Activated CD4-positive, alpha-beta T cell treated with anti-CD3 and anti-CD28 coated beads for 36 hours (primary cell): ENCODE measurements at regions of chr1 and their contacts with region 1.

Region 1: DNA sequence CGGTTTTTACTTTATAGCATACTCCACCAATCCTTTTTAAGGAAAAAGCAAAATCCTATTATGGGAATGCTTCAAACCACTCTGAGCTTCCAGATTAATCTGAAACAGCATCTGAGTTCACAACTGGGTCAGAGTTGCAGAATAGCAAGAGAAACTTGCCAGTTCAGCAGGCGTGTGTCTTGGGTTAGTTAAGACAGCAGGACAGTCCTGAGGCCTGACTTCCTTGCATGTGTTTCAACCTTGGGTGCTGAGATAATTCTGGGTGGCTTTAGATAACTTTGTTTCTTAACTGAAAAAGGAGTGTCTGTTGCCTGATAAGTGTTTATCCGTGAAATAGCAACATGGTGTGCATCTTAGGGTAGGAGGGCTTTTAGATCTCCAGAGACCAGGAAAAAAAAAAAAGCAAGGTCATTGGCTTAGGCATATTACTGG is 169.2 kb downstream of the DHRS3 start:
- DNase-seq: no peak
- ATAC-seq: no peak
- H3K4me3 Mint-ChIP-seq: peak overlapping the region; percentile 24
- H3K27ac Mint-ChIP-seq: peak overlapping the region; percentile 76
- H3K4me1 Mint-ChIP-seq: peaks cover 69% of the 10 kb centered on the region
- H3K27me3 Mint-ChIP-seq: peaks cover 10% of the 10 kb centered on the region

Region 2: GRCh38 chr1:12012560-12013316 is 436.0 kb before region 1 on chr1:
- CTCF ChIA-PET with region 1: no interaction called
- POLR2A ChIA-PET with region 1: no interaction called
- intact Hi-C with region 1: no loop called
- DNase-seq: peak; percentile 25
- ATAC-seq: peak; percentile 37
- H3K4me3 Mint-ChIP-seq: no peak overlapping the region
- H3K27ac Mint-ChIP-seq: peak overlapping the region; percentile 74
- H3K4me1 Mint-ChIP-seq: peaks cover 25% of the 10 kb centered on the region
- H3K27me3 Mint-ChIP-seq: no peaks in the 10 kb centered on the region

Region 3: GRCh38 chr1:12161662-12162458 is 286.9 kb before region 1 on chr1:
- CTCF ChIA-PET with region 1: no interaction called
- POLR2A ChIA-PET with region 1: no interaction called
- intact Hi-C with region 1: loop called in 1 of 2 experiments (anchors 1 kb)
- DNase-seq: peak; percentile 89
- ATAC-seq: peak; percentile 84
- H3K4me3 Mint-ChIP-seq: peak overlapping the region; percentile 15
- H3K27ac Mint-ChIP-seq: peak overlapping the region; percentile 91
- H3K4me1 Mint-ChIP-seq: peaks cover 73% of the 10 kb centered on the region
- H3K27me3 Mint-ChIP-seq: no peaks in the 10 kb centered on the region

Region 4: GRCh38 chr1:12220890-12221289 is 227.9 kb before region 1 on chr1:
- CTCF ChIA-PET with region 1: no interaction called
- POLR2A ChIA-PET with region 1: no interaction called
- intact Hi-C with region 1: no loop called
- DNase-seq: no peak
- ATAC-seq: no peak
- H3K4me3 Mint-ChIP-seq: no peak overlapping the region
- H3K27ac Mint-ChIP-seq: no peak overlapping the region
- H3K4me1 Mint-ChIP-seq: no peaks in the 10 kb centered on the region
- H3K27me3 Mint-ChIP-seq: peaks cover 3% of the 10 kb centered on the region

Region 5: GRCh38 chr1:12344596-12345349 is 104.0 kb before region 1 on chr1:
- CTCF ChIA-PET with region 1: no interaction called
- POLR2A ChIA-PET with region 1: no interaction called
- intact Hi-C with region 1: loop called in 1 of 2 experiments (anchors 1 kb)
- DNase-seq: peak; percentile 58
- ATAC-seq: peak; percentile 68
- H3K4me3 Mint-ChIP-seq: peak overlapping the region; percentile 63
- H3K27ac Mint-ChIP-seq: peak overlapping the region; percentile 93
- H3K4me1 Mint-ChIP-seq: peaks cover 61% of the 10 kb centered on the region
- H3K27me3 Mint-ChIP-seq: no peaks in the 10 kb centered on the region

Region 6: GRCh38 chr1:12467570-12468286 is 19.0 kb after region 1 on chr1:
- CTCF ChIA-PET with region 1: interaction called, 5 read pairs
- POLR2A ChIA-PET with region 1: no interaction called
- intact Hi-C with region 1: loop called (anchors 1 kb)
- DNase-seq: no peak
- ATAC-seq: peak; percentile 73
- H3K4me3 Mint-ChIP-seq: no peak overlapping the region
- H3K27ac Mint-ChIP-seq: peak overlapping the region; percentile 89
- H3K4me1 Mint-ChIP-seq: peaks cover 51% of the 10 kb centered on the region
- H3K27me3 Mint-ChIP-seq: no peaks in the 10 kb centered on the region

Region 7: DNA sequence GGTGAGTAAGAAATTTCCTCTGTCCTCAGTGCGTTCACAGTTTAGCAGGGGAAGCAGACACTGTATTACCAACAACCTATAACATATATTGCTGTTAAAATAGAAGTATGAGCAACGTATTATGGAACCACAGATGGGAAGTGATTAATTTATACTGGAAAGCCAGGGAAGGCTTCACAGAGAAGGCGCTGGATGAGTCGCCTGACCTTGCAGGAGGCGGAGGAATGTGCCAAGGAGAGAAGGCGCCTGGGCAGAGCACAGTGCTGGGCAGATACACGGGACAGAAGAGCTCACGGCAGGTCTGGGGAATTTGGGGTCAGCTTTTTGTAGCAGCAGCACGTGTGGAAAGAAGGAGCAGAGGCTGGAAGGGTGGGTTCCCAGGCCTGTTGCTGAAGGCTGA is 52.9 kb after region 1 on chr1:
- CTCF ChIA-PET with region 1: no interaction called
- POLR2A ChIA-PET with region 1: no interaction called
- intact Hi-C with region 1: loop called in 1 of 2 experiments (anchors 1 kb)
- DNase-seq: no peak
- ATAC-seq: no peak
- H3K4me3 Mint-ChIP-seq: no peak overlapping the region
- H3K27ac Mint-ChIP-seq: peak overlapping the region; percentile 68
- H3K4me1 Mint-ChIP-seq: peaks cover 45% of the 10 kb centered on the region
- H3K27me3 Mint-ChIP-seq: no peaks in the 10 kb centered on the region

Region 8: GRCh38 chr1:12518931-12519692 is 70.3 kb after region 1 on chr1:
- CTCF ChIA-PET with region 1: no interaction called
- POLR2A ChIA-PET with region 1: no interaction called
- intact Hi-C with region 1: loop called (anchors 1 kb)
- DNase-seq: peak; percentile 82
- ATAC-seq: peak; percentile 98
- H3K4me3 Mint-ChIP-seq: no peak overlapping the region
- H3K27ac Mint-ChIP-seq: peak overlapping the region; percentile 59
- H3K4me1 Mint-ChIP-seq: peaks cover 34% of the 10 kb centered on the region
- H3K27me3 Mint-ChIP-seq: no peaks in the 10 kb centered on the region